Activated CD8-positive, alpha-beta T cell treated with anti-CD3 and anti-CD28 coated beads for 36 hours (primary cell): ENCODE measurements at regions of chr12 and their contacts with region 1.

Region 1: DNA sequence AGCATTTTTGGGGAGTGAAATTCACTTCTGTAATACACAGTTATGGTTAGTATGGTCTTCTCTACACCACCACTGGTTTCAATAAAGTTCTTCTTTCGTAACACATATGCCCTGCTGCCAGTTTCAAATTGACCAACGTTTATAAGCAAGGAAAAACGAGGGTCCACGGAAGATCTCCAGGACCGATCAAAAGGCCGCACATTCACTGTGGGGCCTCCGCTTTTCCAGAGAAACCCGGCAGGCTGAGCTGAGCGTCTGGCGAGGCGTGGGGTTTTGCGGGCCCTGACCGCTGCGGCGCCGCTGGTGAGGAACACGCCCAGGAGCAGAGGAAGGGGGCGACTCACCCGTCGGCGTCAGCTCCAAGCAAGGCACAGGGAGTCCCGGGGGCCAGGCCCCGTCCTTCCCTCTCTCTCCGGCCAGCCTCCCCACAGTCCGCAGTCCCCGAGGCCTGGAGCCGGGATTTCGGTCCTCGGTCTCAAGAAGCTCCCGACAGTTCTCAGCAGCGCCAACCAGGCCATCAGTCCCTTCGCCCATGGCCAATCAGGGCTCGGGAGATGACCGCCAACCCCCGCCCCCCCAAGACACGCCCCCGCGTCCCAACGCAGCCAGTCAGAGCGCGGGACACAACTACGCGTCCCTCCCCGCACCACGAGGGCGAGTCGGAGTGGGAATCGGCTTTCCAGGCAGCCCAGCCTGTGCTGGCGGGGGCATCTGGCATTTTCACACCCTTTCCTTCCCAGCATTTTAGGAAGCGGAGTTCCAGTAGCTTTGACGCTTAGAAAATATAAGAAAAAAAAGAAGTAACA is at the start of gene MTERF2:
- DNase-seq: peak; percentile 86
- ATAC-seq: peak; percentile 98
- H3K4me3 Mint-ChIP-seq: peak within 1 kb of the TSS; percentile 90
- H3K27ac Mint-ChIP-seq: peak within 1 kb of the TSS; percentile 85
- H3K4me1 Mint-ChIP-seq: peaks cover 38% of the 10 kb centered on the region
- H3K27me3 Mint-ChIP-seq: no peaks in the 10 kb centered on the region
- CTCF ChIP-seq: no peak
- total RNA-seq, gene MTERF2: 4.8 to 5.9 TPM

Region 2: DNA sequence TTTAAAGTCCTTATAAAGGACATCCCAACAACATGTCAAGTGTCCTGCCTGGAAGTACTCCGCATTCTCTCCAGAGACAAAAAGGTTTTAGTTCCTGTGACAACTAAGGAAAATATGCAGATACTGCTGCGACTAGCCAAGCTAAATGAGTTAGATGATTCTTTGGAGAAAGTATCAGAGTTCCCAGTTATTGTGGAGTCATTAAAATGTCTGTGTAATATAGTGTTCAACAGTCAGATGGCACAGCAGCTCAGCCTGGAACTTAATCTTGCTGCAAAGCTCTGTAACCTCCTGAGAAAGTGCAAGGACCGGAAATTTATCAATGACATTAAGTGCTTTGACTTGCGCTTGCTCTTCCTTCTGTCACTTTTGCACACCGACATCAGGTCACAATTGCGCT is 172.1 kb before region 1 on chr12:
- CTCF ChIA-PET with region 1: no interaction called
- POLR2A ChIA-PET with region 1: no interaction called
- intact Hi-C with region 1: no loop called
- DNase-seq: no peak
- ATAC-seq: no peak
- H3K4me3 Mint-ChIP-seq: no peak overlapping the region
- H3K27ac Mint-ChIP-seq: no peak overlapping the region
- H3K4me1 Mint-ChIP-seq: no peaks in the 10 kb centered on the region
- H3K27me3 Mint-ChIP-seq: no peaks in the 10 kb centered on the region
- CTCF ChIP-seq: no peak

Region 3: GRCh38 chr12:106955377-106956047 is 31.3 kb before region 1 on chr12 and contains the start of gene TMEM263:
- CTCF ChIA-PET with region 1: interaction called, 4 read pairs
- POLR2A ChIA-PET with region 1: interaction called, 11 read pairs
- intact Hi-C with region 1: no loop called
- DNase-seq: peak; percentile 92
- ATAC-seq: peak; percentile 86
- H3K4me3 Mint-ChIP-seq: peak within 1 kb of the TSS; percentile 96
- H3K27ac Mint-ChIP-seq: peak within 1 kb of the TSS; percentile 95
- H3K4me1 Mint-ChIP-seq: peaks cover 19% of the 10 kb centered on the region
- H3K27me3 Mint-ChIP-seq: no peaks in the 10 kb centered on the region
- CTCF ChIP-seq: no peak
- total RNA-seq, gene TMEM263: 43.5 to 46.5 TPM